PC-3 (cell line): ENCODE measurements at regions of chr12 and their contacts with region 1.

Region 1: GRCh38 chr12:8890313-8891085 is 23.8 kb upstream of the PHC1 start:
- DNase-seq: peak; percentile 59
- ATAC-seq: peak; percentile 60
- H3K4me3 ChIP-seq: peak overlapping the region; percentile 70
- H3K27ac ChIP-seq: no peak overlapping the region
- H3K4me1 ChIP-seq: no peaks in the 10 kb centered on the region
- H3K27me3 ChIP-seq: 0 out of 2 replicates have a peak, but pooled peaks cover 5% of the 10 kb centered on the region
- CTCF ChIP-seq: peak; percentile 82

Region 2: GRCh38 chr12:8687846-8688601 is 202.5 kb before region 1 on chr12:
- CTCF ChIA-PET with region 1: no interaction called
- POLR2A ChIA-PET with region 1: no interaction called
- intact Hi-C with region 1: loop called (anchors 10 kb)
- DNase-seq: peak; percentile 11
- ATAC-seq: peak; percentile 46; the same call in 1 of the 2 replicates
- H3K4me3 ChIP-seq: no peak overlapping the region
- H3K27ac ChIP-seq: no peak overlapping the region
- H3K4me1 ChIP-seq: no peaks in the 10 kb centered on the region
- H3K27me3 ChIP-seq: peaks cover 18% of the 10 kb centered on the region
- CTCF ChIP-seq: no peak

Region 3: GRCh38 chr12:9378430-9378835 is 487.9 kb after region 1 on chr12:
- CTCF ChIA-PET with region 1: no interaction called
- POLR2A ChIA-PET with region 1: no interaction called
- intact Hi-C with region 1: no loop called
- DNase-seq: peak; percentile 38
- ATAC-seq: peak; percentile 83
- H3K4me3 ChIP-seq: no peak overlapping the region
- H3K27ac ChIP-seq: no peak overlapping the region
- H3K4me1 ChIP-seq: no peaks in the 10 kb centered on the region
- H3K27me3 ChIP-seq: peaks cover 36% of the 10 kb centered on the region
- CTCF ChIP-seq: peak; percentile 55